ENCODE measurements at regions of chr9 and their contacts with region 1.

Region 1: GRCh38 chr9:33778700-33779351 is 16.5 kb upstream of the PRSS3 start:
- DNase-seq: peak; percentile 79
- H3K4me3 Mint-ChIP-seq: peak overlapping the region; percentile 62
- H3K27ac Mint-ChIP-seq: peak overlapping the region; percentile 27
- H3K4me1 Mint-ChIP-seq: peaks cover 42% of the 10 kb centered on the region
- H3K27me3 Mint-ChIP-seq: no peaks in the 10 kb centered on the region
- CTCF ChIP-seq: peak; percentile 60

Region 2: DNA sequence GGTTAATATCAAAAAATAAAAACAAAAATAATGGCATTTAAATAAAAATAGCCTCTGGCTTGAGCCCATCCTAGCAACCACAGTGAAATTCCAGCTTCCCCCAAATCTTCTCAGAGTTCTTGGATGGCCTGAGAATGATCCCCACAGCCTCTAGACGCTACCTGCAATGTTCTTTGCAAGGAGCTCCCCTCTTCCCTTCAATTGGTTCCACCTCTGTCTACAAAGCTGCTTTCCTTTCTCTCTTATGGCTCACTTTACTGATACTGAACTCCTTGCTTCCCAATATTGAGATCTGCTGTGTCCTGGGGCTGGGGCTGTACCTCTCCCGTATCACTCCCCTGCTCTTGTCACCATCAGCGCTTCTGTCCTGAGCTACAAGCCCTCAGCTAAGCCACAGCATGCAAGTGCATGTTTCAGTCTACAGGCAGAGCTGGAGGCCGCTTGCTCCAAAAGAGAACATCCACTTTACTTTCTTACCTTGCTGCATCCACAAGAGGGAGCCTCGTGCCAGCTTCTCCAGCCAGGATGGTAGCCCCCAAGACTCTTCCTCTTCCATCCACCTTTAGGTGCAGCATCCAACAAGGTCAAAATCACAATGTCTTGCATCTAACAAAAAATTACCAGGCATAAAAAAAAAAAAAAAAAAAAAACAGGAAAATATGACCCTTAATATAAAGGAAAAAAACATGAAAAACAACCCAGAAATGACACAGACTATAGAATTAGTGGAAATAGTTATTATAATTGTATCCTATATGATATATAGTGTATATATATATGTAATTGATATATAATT is 40.8 kb before region 1 on chr9:
- CTCF ChIA-PET with region 1: interaction called, 69 read pairs
- POLR2A ChIA-PET with region 1: interaction called, 26 read pairs
- intact Hi-C with region 1: loop called (anchors 1 kb)
- DNase-seq: peak; percentile 71
- H3K4me3 Mint-ChIP-seq: no peak overlapping the region
- H3K27ac Mint-ChIP-seq: peak overlapping the region; percentile 14
- H3K4me1 Mint-ChIP-seq: peaks cover 23% of the 10 kb centered on the region
- H3K27me3 Mint-ChIP-seq: no peaks in the 10 kb centered on the region
- CTCF ChIP-seq: peak; percentile 88

Region 3: GRCh38 chr9:33750839-33751339 is 27.9 kb before region 1 on chr9:
- CTCF ChIA-PET with region 1: interaction called, 10 read pairs
- POLR2A ChIA-PET with region 1: interaction called, 4 read pairs
- intact Hi-C with region 1: no loop called
- DNase-seq: no peak
- H3K4me3 Mint-ChIP-seq: peak overlapping the region; percentile 41
- H3K27ac Mint-ChIP-seq: no peak overlapping the region
- H3K4me1 Mint-ChIP-seq: no peaks in the 10 kb centered on the region
- H3K27me3 Mint-ChIP-seq: no peaks in the 10 kb centered on the region
- CTCF ChIP-seq: no peak

Region 4: DNA sequence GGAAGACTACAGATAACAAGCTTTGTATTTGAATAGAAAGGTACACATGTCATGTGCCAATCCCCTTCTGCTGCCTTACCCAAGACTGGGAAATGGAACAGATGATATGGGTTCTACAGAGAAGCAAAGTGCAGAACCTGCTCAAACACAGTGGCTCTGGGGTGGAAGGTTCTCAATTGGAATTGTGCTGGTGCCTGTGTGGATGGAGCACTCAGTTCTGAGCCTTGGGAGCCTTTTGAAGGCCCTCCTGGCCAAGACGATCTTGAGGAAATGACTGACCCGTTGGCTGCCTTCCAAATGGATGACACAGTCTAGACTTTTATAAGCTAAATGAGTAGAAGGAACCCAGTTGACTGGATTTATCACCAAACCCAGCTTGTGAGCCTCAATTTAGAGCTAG is 12.3 kb after region 1 on chr9:
- CTCF ChIA-PET with region 1: interaction called, 16 read pairs
- POLR2A ChIA-PET with region 1: interaction called, 4 read pairs
- intact Hi-C with region 1: loop called (anchors 1 kb)
- DNase-seq: peak; percentile 82
- H3K4me3 Mint-ChIP-seq: no peak overlapping the region
- H3K27ac Mint-ChIP-seq: no peak overlapping the region
- H3K4me1 Mint-ChIP-seq: peaks cover 13% of the 10 kb centered on the region
- H3K27me3 Mint-ChIP-seq: peaks cover 15% of the 10 kb centered on the region
- CTCF ChIP-seq: no peak

Region 5: DNA sequence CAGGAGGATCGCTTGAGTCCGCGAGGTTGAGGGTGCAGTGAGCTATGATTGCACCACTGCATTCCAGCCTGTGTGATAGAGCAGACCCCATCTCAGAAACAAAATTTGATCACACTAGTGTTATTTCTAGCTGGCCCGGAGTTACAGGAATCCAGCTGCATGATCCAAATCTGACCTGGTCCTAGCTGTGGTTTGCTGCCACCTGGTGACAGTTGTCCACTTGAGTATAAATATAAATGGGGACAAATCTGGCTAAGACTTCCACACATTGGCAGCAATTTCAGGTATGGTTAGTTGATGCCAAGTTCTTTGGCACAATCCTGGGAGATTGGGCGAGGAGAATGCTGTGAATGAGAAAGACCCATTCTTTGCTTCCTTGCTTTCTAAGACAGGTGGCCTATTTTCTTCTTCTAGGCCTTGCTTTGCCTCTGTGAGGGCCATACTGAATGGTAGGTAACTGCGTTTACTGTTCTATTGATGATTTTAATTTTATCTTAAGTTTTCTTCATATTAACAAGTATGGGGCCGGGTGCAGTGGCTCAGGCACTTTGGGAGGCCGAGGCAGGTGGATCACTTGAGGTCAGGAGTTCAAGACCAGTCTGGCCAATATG is 73.5 kb after region 1 on chr9:
- CTCF ChIA-PET with region 1: interaction called, 6 read pairs
- POLR2A ChIA-PET with region 1: interaction called, 4 read pairs
- intact Hi-C with region 1: loop called (anchors 1 kb)
- DNase-seq: peak; percentile 76
- H3K4me3 Mint-ChIP-seq: no peak overlapping the region
- H3K27ac Mint-ChIP-seq: no peak overlapping the region
- H3K4me1 Mint-ChIP-seq: peaks cover 12% of the 10 kb centered on the region
- H3K27me3 Mint-ChIP-seq: no peaks in the 10 kb centered on the region
- CTCF ChIP-seq: peak; percentile 74

Region 6: DNA sequence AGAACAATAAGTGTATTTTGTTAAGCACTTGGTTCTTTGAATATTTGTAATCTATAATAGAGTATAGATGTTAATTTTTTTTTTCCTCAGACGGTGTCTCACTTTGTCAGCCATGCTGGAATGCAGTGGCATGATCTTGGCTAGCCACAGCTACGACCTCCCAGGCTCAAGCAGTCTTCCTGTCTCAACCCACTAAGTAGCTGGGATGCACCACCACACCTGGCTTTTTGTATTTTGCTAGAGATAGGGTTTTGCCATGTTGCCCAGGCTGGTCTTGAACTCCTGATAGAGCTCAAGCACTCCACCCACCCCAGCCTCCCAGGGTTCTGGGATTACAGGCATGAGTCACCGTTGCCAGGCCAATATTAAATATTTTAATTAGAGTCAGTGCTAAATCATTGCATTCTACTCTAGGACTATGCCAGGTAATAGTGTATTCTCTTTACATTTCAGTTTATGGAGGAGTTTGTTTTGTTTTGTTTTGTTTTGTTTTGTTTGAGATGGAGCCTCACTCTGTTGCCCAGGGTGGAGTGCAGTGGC is 79.6 kb after region 1 on chr9:
- CTCF ChIA-PET with region 1: interaction called, 14 read pairs
- POLR2A ChIA-PET with region 1: no interaction called
- intact Hi-C with region 1: no loop called
- DNase-seq: no peak
- H3K4me3 Mint-ChIP-seq: no peak overlapping the region
- H3K27ac Mint-ChIP-seq: no peak overlapping the region
- H3K4me1 Mint-ChIP-seq: peaks cover 13% of the 10 kb centered on the region
- H3K27me3 Mint-ChIP-seq: no peaks in the 10 kb centered on the region
- CTCF ChIP-seq: no peak

Measured in MCF 10A (cell line).